ENCODE measurements at regions of chr17 and their contacts with region 1.

Region 1: GRCh38 chr17:35141681-35142466 is at the start of gene NLE1:
- DNase-seq: peak; percentile 89
- H3K4me3 Mint-ChIP-seq: peak within 1 kb of the TSS; percentile 77
- H3K27ac Mint-ChIP-seq: peak within 1 kb of the TSS; percentile 65
- H3K4me1 Mint-ChIP-seq: peaks cover 30% of the 10 kb centered on the region
- H3K27me3 Mint-ChIP-seq: no peaks in the 10 kb centered on the region
- total RNA-seq, gene NLE1: 13.4 to 14.0 TPM

Region 2: DNA sequence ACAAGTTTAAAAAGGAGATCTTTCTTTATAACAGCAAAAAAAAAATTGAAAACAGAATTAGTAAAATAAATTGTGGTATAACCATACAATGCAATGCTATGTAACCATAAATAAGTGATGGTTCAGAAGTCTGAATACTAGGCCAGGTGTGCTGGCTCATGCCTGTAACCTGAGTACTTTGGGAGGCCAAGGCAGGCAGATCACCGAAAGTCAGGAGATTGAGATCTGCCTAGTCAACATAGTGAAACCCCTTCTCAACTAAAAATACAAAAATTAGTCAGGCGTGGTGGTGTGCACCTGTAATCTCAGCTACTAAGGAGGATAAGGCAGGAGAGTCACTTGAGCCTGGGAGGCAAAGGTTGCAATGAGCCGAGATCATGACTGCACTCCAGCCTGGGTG is 215.2 kb before region 1 on chr17:
- CTCF ChIA-PET with region 1: no interaction called
- POLR2A ChIA-PET with region 1: no interaction called
- DNase-seq: no peak
- H3K4me3 Mint-ChIP-seq: no peak overlapping the region
- H3K27ac Mint-ChIP-seq: no peak overlapping the region
- H3K4me1 Mint-ChIP-seq: peaks cover 3% of the 10 kb centered on the region
- H3K27me3 Mint-ChIP-seq: peaks cover 5% of the 10 kb centered on the region

Region 3: GRCh38 chr17:35130392-35130791 is 11.5 kb before region 1 on chr17:
- CTCF ChIA-PET with region 1: interaction called, 5 read pairs
- POLR2A ChIA-PET with region 1: interaction called, 14 read pairs
- DNase-seq: no peak
- H3K4me3 Mint-ChIP-seq: no peak overlapping the region
- H3K27ac Mint-ChIP-seq: no peak overlapping the region
- H3K4me1 Mint-ChIP-seq: no peaks in the 10 kb centered on the region
- H3K27me3 Mint-ChIP-seq: no peaks in the 10 kb centered on the region

Region 4: GRCh38 chr17:35254107-35254802 is 112.4 kb after region 1 on chr17:
- CTCF ChIA-PET with region 1: no interaction called
- POLR2A ChIA-PET with region 1: no interaction called
- DNase-seq: no peak
- H3K4me3 Mint-ChIP-seq: no peak overlapping the region
- H3K27ac Mint-ChIP-seq: peak overlapping the region; percentile 6
- H3K4me1 Mint-ChIP-seq: peaks cover 66% of the 10 kb centered on the region
- H3K27me3 Mint-ChIP-seq: no peaks in the 10 kb centered on the region